Calu3 (cell line): ENCODE measurements at regions of chr7 and their contacts with region 1.

Region 1: DNA sequence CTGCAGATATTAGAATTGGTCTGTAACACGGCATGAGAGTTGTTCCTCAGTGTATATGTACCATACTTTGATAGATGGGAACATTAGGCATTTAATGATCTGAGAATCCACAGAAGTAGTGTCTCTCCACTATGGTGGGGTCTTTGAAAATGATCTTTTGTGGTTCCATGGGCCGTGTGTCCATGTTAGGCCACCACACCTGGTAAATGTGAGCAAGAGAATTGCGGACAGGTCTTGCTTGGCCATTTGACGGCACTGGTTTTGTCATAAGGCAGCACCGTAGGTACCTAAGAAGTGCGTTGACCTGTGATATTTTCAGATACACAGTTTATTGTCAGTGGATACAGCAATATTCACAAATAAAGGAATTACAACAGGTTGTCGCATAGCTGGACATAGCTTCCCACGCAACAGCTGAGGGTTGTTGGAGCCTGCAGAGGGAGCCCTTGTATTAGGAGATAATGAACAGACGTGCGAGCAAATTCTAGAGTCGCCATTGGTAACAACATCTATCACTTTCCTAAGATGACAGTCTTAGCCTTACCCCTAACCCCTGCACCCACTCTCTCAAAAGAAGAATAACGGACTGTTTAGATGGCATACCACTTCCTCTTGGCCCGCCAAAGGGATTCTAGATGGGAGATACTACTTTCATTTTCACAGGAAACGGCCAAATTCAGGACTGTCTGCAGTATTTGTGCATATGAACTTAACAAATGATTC is 111.4 kb downstream of the COL28A1 start:
- DNase-seq: peak; percentile 82
- H3K4me3 Mint-ChIP-seq: peak overlapping the region; percentile 51
- H3K27ac Mint-ChIP-seq: no peak overlapping the region
- H3K4me1 Mint-ChIP-seq: peaks cover 8% of the 10 kb centered on the region
- H3K27me3 Mint-ChIP-seq: no peaks in the 10 kb centered on the region
- CTCF ChIP-seq: peak; percentile 92

Region 2: GRCh38 chr7:7408001-7408770 is 16.1 kb before region 1 on chr7:
- CTCF ChIA-PET with region 1: no interaction called
- intact Hi-C with region 1: no loop called
- DNase-seq: peak; percentile 55
- H3K4me3 Mint-ChIP-seq: no peak overlapping the region
- H3K27ac Mint-ChIP-seq: peak overlapping the region; percentile 3
- H3K4me1 Mint-ChIP-seq: peaks cover 42% of the 10 kb centered on the region
- H3K27me3 Mint-ChIP-seq: no peaks in the 10 kb centered on the region
- CTCF ChIP-seq: no peak

Region 3: GRCh38 chr7:7535691-7536090 is 111.4 kb after region 1 on chr7 and contains the start of gene COL28A1:
- CTCF ChIA-PET with region 1: interaction called, 13 read pairs
- intact Hi-C with region 1: loop called (anchors 1 kb)
- DNase-seq: no peak
- H3K4me3 Mint-ChIP-seq: no peak within 1 kb of the TSS
- H3K27ac Mint-ChIP-seq: no peak within 1 kb of the TSS
- H3K4me1 Mint-ChIP-seq: peaks cover 6% of the 10 kb centered on the region
- H3K27me3 Mint-ChIP-seq: no peaks in the 10 kb centered on the region
- CTCF ChIP-seq: no peak
- total RNA-seq, gene COL28A1: 1.3 and 3.2 TPM in 2 replicates

Region 4: DNA sequence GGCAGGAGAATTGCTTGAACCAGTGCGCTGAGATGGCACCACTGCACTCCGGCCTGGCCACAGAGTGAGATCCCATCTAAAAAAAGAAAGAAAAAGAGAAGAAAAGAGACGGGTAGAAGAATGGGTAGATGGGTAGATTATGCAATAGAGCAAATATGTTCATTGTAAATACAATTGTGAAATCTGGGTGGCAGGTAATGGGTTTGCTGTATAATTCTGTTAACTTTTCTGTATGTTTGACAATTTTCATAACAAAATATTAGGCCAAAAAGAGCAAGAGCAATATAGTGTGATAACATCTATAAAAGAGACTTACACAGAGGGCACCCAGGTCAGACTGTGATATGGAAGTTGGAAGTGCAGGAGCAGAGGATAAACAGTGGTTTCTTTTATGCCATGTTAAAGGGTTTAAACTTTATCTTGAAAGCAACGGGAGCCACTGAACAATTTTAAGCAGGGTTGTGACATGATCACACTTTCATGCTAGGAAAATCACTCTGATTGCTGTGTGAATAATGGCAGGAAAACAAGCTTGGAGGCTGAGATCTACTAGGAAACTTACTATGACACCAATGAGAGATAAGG is 118.0 kb after region 1 on chr7:
- CTCF ChIA-PET with region 1: interaction called, 13 read pairs
- intact Hi-C with region 1: loop called (anchors 1 kb)
- DNase-seq: no peak
- H3K4me3 Mint-ChIP-seq: no peak overlapping the region
- H3K27ac Mint-ChIP-seq: no peak overlapping the region
- H3K4me1 Mint-ChIP-seq: peaks cover 18% of the 10 kb centered on the region
- H3K27me3 Mint-ChIP-seq: no peaks in the 10 kb centered on the region
- CTCF ChIP-seq: no peak

Region 5: GRCh38 chr7:8290645-8291314 is 866.5 kb after region 1 on chr7:
- CTCF ChIA-PET with region 1: no interaction called
- intact Hi-C with region 1: loop called (anchors 5 kb)
- DNase-seq: peak; percentile 44
- H3K4me3 Mint-ChIP-seq: no peak overlapping the region
- H3K27ac Mint-ChIP-seq: no peak overlapping the region
- H3K4me1 Mint-ChIP-seq: peaks cover 35% of the 10 kb centered on the region
- H3K27me3 Mint-ChIP-seq: no peaks in the 10 kb centered on the region
- CTCF ChIP-seq: no peak